IMR-90 (cell line): ENCODE measurements at regions of chr15 and their contacts with region 1.

Region 1: DNA sequence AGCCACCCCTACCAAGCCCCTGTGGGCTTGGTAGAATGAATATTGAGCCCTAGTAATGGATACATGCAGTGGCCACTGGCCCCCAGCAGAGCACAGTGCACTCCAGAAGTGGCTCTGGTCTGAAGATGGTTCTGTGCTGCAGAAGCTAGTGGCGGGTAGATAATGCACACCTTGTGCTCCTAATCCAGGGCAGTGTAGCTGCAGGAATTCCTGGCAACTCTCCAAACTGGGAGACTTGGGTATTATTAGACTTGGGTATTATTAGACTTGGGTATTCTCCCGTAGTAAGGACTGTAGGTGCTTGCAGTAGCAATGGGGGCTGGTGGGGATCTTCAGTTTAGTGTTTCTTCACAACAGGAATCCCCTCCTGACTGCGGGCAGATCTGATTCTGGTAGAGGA is 34.7 kb downstream of the NUSAP1 start:
- DNase-seq: no peak
- ATAC-seq: no peak
- H3K4me3 ChIP-seq: no peak overlapping the region
- H3K27ac ChIP-seq: no peak overlapping the region
- H3K4me1 ChIP-seq: no peaks in the 10 kb centered on the region
- H3K27me3 ChIP-seq: no peaks in the 10 kb centered on the region
- CTCF ChIP-seq: no peak
- POLR2A ChIP-seq: no peak
- RAD21 ChIP-seq: no peak

Region 2: GRCh38 chr15:40182358-40183029 is 1184.9 kb before region 1 on chr15:
- CTCF ChIA-PET with region 1: no interaction called
- POLR2A ChIA-PET with region 1: no interaction called
- dilution Hi-C with region 1: no loop called
- in situ Hi-C with region 1: no loop called
- intact Hi-C with region 1: loop called (anchors 10 kb)
- DNase-seq: no peak
- ATAC-seq: no peak
- H3K4me3 ChIP-seq: no peak overlapping the region
- H3K27ac ChIP-seq: no peak overlapping the region
- H3K4me1 ChIP-seq: no peaks in the 10 kb centered on the region
- H3K27me3 ChIP-seq: no peaks in the 10 kb centered on the region
- CTCF ChIP-seq: no peak
- POLR2A ChIP-seq: no peak
- RAD21 ChIP-seq: no peak

Region 3: DNA sequence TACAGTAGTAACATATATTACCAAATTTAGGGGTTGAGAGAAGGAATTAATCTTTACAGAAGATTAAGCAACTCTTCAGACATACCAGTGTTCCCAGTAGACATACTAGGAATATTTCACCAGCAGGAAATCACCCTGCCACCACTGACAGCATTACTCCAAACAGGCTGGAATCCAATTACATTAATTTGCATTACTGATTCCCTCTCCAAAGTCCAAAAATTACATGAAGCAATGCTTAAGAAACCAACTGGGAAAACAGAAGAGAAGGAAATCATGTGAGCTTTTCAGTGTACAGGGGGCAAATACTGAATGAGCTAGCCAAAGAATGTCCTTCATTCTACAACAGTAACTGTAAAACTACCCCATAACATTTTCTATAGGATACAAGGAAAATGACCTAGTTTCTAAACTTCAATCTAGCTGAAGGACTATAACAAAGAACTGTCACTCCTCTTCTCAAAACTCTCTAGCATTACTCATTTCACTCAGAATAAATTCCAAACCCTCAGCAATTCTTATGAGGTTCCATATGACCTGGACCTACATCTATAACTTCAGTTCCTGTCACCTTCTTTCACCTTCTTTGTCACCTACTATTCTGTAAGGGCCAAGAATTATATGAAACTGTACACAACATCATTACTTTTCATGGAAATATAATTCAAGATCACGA is 324.0 kb before region 1 on chr15:
- CTCF ChIA-PET with region 1: no interaction called
- POLR2A ChIA-PET with region 1: no interaction called
- dilution Hi-C with region 1: no loop called
- in situ Hi-C with region 1: no loop called
- intact Hi-C with region 1: no loop called
- DNase-seq: peak; percentile 67
- ATAC-seq: peak; percentile 85
- H3K4me3 ChIP-seq: no peak overlapping the region
- H3K27ac ChIP-seq: peak overlapping the region; percentile 43; the same call in 1 of the 2 replicates
- H3K4me1 ChIP-seq: peaks cover 3% of the 10 kb centered on the region; the same call in 1 of the 2 replicates
- H3K27me3 ChIP-seq: no peaks in the 10 kb centered on the region
- CTCF ChIP-seq: no peak
- POLR2A ChIP-seq: no peak
- RAD21 ChIP-seq: no peak